ENCODE measurements at regions of chr13 and their contacts with region 1.

Region 1: GRCh38 chr13:65609350-65609749 is 1620.8 kb downstream of the PCDH9 start:
- DNase-seq: no peak
- ATAC-seq: no peak
- H3K4me3 ChIP-seq: no peak overlapping the region
- H3K4me3 Mint-ChIP-seq: no peak overlapping the region
- H3K27ac ChIP-seq: no peak overlapping the region
- H3K27ac Mint-ChIP-seq: no peak overlapping the region
- H3K4me1 ChIP-seq: no peaks in the 10 kb centered on the region
- H3K4me1 Mint-ChIP-seq: no peaks in the 10 kb centered on the region
- H3K27me3 ChIP-seq: no peaks in the 10 kb centered on the region
- H3K27me3 Mint-ChIP-seq: no peaks in the 10 kb centered on the region
- CTCF ChIP-seq: no peak

Region 2: GRCh38 chr13:65633806-65634205 is 24.5 kb after region 1 on chr13:
- CTCF ChIA-PET with region 1: no interaction called
- POLR2A ChIA-PET with region 1: no interaction called
- intact Hi-C with region 1: loop called (anchors 1 kb)
- DNase-seq: no peak
- ATAC-seq: no peak
- H3K4me3 ChIP-seq: no peak overlapping the region
- H3K4me3 Mint-ChIP-seq: no peak overlapping the region
- H3K27ac ChIP-seq: no peak overlapping the region
- H3K27ac Mint-ChIP-seq: no peak overlapping the region
- H3K4me1 ChIP-seq: no peaks in the 10 kb centered on the region
- H3K4me1 Mint-ChIP-seq: no peaks in the 10 kb centered on the region
- H3K27me3 ChIP-seq: no peaks in the 10 kb centered on the region
- H3K27me3 Mint-ChIP-seq: no peaks in the 10 kb centered on the region
- CTCF ChIP-seq: no peak